Gastrocnemius medialis (tissue), 4 donors: ENCODE measurements at regions of chr19 and their contacts with region 1.

Region 1: DNA sequence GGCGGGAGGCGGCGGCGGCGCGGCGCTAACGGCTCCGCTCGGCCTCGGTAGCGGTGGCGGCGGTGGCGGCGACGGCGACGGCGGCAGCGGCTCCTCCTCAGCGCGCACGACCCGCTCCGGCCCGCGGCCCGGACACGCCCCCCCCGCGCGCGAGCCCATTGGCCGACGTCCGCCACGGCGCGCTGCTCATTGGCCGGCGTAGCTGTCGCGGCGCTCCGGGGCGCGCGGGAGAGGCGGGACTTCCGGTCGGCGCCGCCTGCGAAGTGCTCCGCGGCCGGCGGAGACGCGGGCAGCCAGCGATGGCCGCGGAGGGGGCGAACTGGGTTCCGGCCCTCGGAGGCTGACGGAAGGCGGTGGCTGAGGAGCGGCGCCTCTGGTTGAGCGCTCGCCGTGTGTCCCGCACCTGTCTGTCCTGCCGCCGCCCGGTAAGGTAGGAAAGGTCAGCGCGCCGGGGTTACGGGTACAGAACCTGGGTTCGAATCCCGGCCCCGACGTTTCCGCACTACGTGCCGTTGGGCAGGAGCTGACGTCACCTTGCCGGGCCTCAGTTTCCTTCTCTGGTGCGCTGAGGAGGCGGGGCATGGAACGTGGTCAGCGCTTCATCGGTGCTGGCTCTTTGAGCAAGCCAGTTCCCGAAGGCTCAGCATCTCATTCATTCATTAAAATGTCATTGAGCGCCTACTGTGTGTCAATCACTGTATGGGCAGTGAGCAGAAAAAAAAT is at the start of gene ELAVL1:
- DNase-seq: peak; percentile 80 to 87
- ATAC-seq: peak; percentile 75 to 79
- H3K4me3 ChIP-seq: peak within 1 kb of the TSS; percentile 80 to 91 (median 84)
- H3K27ac ChIP-seq: peak within 1 kb of the TSS; percentile 80 to 93 (median 86)
- H3K4me1 ChIP-seq: peaks cover 37 to 40% of the 10 kb centered on the region in 2 donors
- H3K27me3 ChIP-seq: no peaks in the 10 kb centered on the region
- CTCF ChIP-seq: peak in 1 of 5 experiments; percentile 14
- POLR2A ChIP-seq: peak; percentile 45 to 70
- total RNA-seq, gene ELAVL1: 18.2 to 40.5 (median 28.9) TPM

Region 2: GRCh38 chr19:7852851-7853769 is 152.6 kb before region 1 on chr19:
- in situ Hi-C with region 1: no loop called
- intact Hi-C with region 1: loop called (anchors 10 kb)
- DNase-seq: peak in 1 of 2 donors; percentile 44
- ATAC-seq: peak; percentile 45 to 72
- H3K4me3 ChIP-seq: no peak overlapping the region
- H3K27ac ChIP-seq: no peak overlapping the region
- H3K4me1 ChIP-seq: peaks cover 0 to 6% of the 10 kb centered on the region in 2 donors
- H3K27me3 ChIP-seq: peaks cover 0 to 3% (median 0%) of the 10 kb centered on the region in 3 donors
- CTCF ChIP-seq: peak; percentile 52 to 86 (median 79)
- POLR2A ChIP-seq: no peak

Region 3: DNA sequence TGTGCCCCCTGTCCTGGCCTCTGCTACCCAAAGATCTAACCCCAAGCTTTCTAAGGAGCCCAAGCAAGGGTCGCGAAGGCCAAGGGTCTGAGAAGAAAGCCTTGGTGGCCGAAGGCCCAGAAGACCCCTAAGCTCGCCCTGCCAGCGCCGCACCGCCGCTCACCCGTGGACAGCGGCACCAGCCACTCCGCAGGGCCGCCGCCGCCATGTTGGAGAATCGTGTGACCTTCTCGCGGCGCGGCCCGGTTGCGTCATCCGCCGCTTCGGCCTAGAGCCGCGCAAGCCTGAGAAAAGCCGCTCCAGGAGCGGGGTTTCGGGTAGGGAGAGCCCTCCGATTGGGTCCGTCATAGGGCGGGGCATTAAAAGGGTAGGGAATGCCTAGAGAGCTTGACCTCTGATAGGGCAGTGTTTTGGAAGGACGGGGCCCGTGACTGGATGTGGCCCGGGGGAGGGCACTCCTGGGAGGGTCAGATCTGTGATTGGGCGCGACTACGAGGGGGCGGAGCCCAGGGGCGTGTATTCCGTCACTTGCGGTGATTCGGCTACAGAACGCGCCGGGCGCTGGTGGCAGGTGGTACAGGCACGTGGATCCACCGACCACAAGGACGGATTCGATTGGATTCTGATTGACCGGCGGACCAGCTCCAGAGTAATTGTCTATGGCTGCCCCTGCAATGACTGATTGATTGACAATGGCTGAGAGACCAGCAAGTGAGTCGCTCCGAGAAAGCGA is 62.1 kb before region 1 on chr19 and contains the start of gene TIMM44:
- in situ Hi-C with region 1: loop called in 3 of 4 experiments (anchors 5 kb)
- intact Hi-C with region 1: loop called (anchors 1 kb)
- DNase-seq: peak; percentile 100
- ATAC-seq: peak; percentile 97 to 98
- H3K4me3 ChIP-seq: peak within 1 kb of the TSS; percentile 67 to 97 (median 82)
- H3K27ac ChIP-seq: peak within 1 kb of the TSS; percentile 94 to 100 (median 98)
- H3K4me1 ChIP-seq: peaks cover 10 to 19% of the 10 kb centered on the region in 2 donors
- H3K27me3 ChIP-seq: no peaks in the 10 kb centered on the region
- CTCF ChIP-seq: no peak
- POLR2A ChIP-seq: peak; percentile 92 to 97
- total RNA-seq, gene TIMM44: 53.9 to 168 (median 94.1) TPM

Region 4: DNA sequence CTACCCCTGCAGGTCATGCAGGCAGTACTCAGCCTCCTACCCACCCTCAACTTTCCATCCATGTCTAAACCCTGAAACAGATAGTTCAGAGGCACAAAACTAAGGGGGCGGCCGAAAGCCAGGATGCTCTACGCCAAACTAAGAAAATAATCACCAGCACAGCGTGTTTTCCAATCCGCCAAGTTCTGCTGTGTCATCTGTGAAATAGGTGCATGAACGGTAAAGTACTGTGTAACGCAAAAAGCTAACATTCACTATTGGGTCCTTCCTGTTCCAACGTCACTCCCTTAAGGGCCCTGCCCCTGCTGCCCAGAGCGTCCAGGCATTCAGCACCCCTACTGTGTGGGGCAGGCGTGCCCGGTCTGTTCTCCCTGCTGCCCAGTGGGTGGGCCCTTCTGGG is 50.0 kb before region 1 on chr19:
- in situ Hi-C with region 1: no loop called
- intact Hi-C with region 1: no loop called
- DNase-seq: no peak
- ATAC-seq: no peak
- H3K4me3 ChIP-seq: no peak overlapping the region
- H3K27ac ChIP-seq: no peak overlapping the region
- H3K4me1 ChIP-seq: peaks cover 14 to 17% of the 10 kb centered on the region in 2 donors
- H3K27me3 ChIP-seq: no peaks in the 10 kb centered on the region
- CTCF ChIP-seq: no peak
- POLR2A ChIP-seq: no peak

Region 5: GRCh38 chr19:7970716-7971448 is 34.8 kb before region 1 on chr19:
- in situ Hi-C with region 1: no loop called
- intact Hi-C with region 1: loop called (anchors 1 kb)
- DNase-seq: peak in 1 of 2 donors; percentile 35
- ATAC-seq: no peak
- H3K4me3 ChIP-seq: no peak overlapping the region
- H3K27ac ChIP-seq: no peak overlapping the region
- H3K4me1 ChIP-seq: peaks cover 18 to 19% of the 10 kb centered on the region in 2 donors
- H3K27me3 ChIP-seq: no peaks in the 10 kb centered on the region
- CTCF ChIP-seq: peak; percentile 52 to 77 (median 69)
- POLR2A ChIP-seq: no peak